Body of pancreas (tissue), 4 donors: ENCODE measurements at regions of chr2 and their contacts with region 1.

Region 1: GRCh38 chr2:11688222-11689069 is 18.5 kb upstream of the NTSR2 start:
- DNase-seq: peak; percentile 77 to 89 (median 82)
- ATAC-seq: peak; percentile 76
- H3K4me3 ChIP-seq: no peak overlapping the region
- H3K27ac ChIP-seq: peak overlapping the region; percentile 29 to 76 (median 64)
- H3K4me1 ChIP-seq: peaks cover 28% of the 10 kb centered on the region
- H3K27me3 ChIP-seq: no peaks in the 10 kb centered on the region
- CTCF ChIP-seq: peak; percentile 45 to 88 (median 84)
- POLR2A ChIP-seq: no peak

Region 2: GRCh38 chr2:11778923-11779757 is 90.7 kb after region 1 on chr2:
- intact Hi-C with region 1: loop called (anchors 5 kb)
- DNase-seq: peak; percentile 70 to 84 (median 76)
- ATAC-seq: peak; percentile 87
- H3K4me3 ChIP-seq: no peak overlapping the region
- H3K27ac ChIP-seq: no peak overlapping the region
- H3K4me1 ChIP-seq: peaks cover 10% of the 10 kb centered on the region
- H3K27me3 ChIP-seq: no peaks in the 10 kb centered on the region
- CTCF ChIP-seq: peak; percentile 91 to 96 (median 94)
- POLR2A ChIP-seq: no peak

Region 3: GRCh38 chr2:12005886-12006681 is 317.6 kb after region 1 on chr2:
- intact Hi-C with region 1: no loop called
- DNase-seq: peak; percentile 60 to 84 (median 74)
- ATAC-seq: peak; percentile 69
- H3K4me3 ChIP-seq: no peak overlapping the region
- H3K27ac ChIP-seq: no peak overlapping the region
- H3K4me1 ChIP-seq: peaks cover 7% of the 10 kb centered on the region
- H3K27me3 ChIP-seq: no peaks in the 10 kb centered on the region
- CTCF ChIP-seq: no peak
- POLR2A ChIP-seq: no peak

Region 4: GRCh38 chr2:12131975-12132374 is 443.5 kb after region 1 on chr2:
- intact Hi-C with region 1: no loop called
- DNase-seq: no peak
- ATAC-seq: peak; percentile 18
- H3K4me3 ChIP-seq: no peak overlapping the region
- H3K27ac ChIP-seq: no peak overlapping the region
- H3K4me1 ChIP-seq: no peaks in the 10 kb centered on the region
- H3K27me3 ChIP-seq: no peaks in the 10 kb centered on the region
- CTCF ChIP-seq: no peak
- POLR2A ChIP-seq: no peak